ENCODE measurements at regions of chr22 and their contacts with region 1.

Region 1: GRCh38 chr22:40757071-40757470 is 62.1 kb downstream of the SLC25A17 start:
- DNase-seq: no peak
- H3K4me3 ChIP-seq: no peak overlapping the region
- H3K27ac ChIP-seq: no peak overlapping the region
- H3K4me1 ChIP-seq: peaks cover 2% of the 10 kb centered on the region
- H3K27me3 ChIP-seq: no peaks in the 10 kb centered on the region
- CTCF ChIP-seq: no peak
- POLR2A ChIP-seq: no peak

Region 2: DNA sequence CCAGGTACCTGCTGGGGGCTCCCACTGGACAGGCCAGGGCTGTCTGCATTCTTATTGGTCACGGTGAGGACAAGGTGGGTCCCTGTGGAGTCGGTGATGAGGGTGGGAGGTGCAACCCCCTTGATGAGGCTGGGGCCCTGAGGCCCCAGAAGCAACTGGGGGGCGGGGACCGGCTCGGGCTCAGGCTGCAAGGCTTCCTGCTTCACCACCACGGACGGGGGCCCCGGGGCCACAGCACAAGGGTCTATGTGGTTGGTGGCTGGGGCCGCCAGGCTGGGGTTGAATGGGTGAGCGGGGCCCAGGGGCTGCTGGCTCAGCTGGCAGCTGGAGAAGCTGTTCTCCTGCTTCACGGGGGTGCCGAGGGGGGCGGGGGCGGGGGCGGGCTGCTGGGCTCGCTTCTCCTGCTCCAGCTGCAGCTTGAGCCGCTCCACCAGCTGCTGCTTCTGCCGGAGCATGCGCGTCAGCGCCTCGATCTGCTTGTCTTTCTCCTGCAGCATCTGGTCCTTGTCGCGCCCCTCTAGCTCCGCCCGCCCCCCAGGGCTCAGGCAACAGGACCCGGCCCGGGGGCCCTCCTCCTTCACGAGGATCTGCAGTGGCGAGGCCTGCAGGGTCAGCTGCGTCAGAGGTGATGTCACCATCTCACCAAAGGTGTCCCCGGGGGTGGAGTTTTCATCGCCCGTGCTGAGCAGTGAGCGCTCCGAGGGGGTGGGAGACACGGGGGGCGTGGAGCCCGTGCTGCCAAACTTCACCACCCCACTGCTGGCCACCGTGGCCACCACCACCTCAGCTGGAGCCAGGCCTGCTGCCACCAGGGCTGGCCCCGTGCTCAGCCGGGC is 338.5 kb before region 1 on chr22:
- intact Hi-C with region 1: loop called (anchors 10 kb)
- DNase-seq: no peak
- H3K4me3 ChIP-seq: no peak overlapping the region
- H3K27ac ChIP-seq: no peak overlapping the region
- H3K4me1 ChIP-seq: no peaks in the 10 kb centered on the region
- H3K27me3 ChIP-seq: no peaks in the 10 kb centered on the region
- CTCF ChIP-seq: no peak
- POLR2A ChIP-seq: no peak